Common myeloid progenitor, CD34-positive (primary cell): ENCODE measurements at regions of chr14 and their contacts with region 1.

Region 1: GRCh38 chr14:91138511-91139359 is 24.9 kb downstream of the DGLUCY start:
- DNase-seq: peak; percentile 74 to 86 (median 81)
- H3K4me3 ChIP-seq: no peak overlapping the region
- H3K27ac ChIP-seq: no peak overlapping the region
- H3K4me1 ChIP-seq: peaks cover 6 to 27% (median 21%) of the 10 kb centered on the region in 4 experiments
- H3K27me3 ChIP-seq: no peaks in the 10 kb centered on the region

Region 2: DNA sequence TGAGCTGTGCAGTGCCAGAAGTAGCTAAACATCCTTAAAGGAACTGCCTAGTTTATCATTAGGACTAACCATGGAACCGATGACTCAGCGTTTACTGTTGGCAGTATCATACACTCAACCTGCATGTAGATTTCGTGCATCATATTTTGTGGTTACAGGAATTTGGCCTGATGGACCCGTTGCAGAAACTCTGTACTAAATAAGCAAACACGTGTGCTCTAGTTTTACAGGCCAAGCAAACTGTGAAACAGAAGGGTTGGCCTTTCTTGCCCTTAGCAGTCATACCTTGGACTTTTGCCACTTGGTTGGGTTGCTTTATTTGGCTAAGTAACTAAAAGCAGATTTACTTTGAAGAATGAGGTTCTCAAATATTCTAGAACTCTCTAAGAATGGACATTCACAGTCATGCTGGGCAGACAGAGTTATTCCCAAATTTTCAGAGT is 10.8 kb after region 1 on chr14:
- CTCF ChIA-PET with region 1: interaction called, 15 read pairs
- POLR2A ChIA-PET with region 1: no interaction called
- DNase-seq: peak; percentile 72 to 90 (median 88)
- H3K4me3 ChIP-seq: no peak overlapping the region
- H3K27ac ChIP-seq: no peak overlapping the region
- H3K4me1 ChIP-seq: peaks cover under 1 to 24% (median 18%) of the 10 kb centered on the region in 4 experiments
- H3K27me3 ChIP-seq: no peaks in the 10 kb centered on the region

Region 3: DNA sequence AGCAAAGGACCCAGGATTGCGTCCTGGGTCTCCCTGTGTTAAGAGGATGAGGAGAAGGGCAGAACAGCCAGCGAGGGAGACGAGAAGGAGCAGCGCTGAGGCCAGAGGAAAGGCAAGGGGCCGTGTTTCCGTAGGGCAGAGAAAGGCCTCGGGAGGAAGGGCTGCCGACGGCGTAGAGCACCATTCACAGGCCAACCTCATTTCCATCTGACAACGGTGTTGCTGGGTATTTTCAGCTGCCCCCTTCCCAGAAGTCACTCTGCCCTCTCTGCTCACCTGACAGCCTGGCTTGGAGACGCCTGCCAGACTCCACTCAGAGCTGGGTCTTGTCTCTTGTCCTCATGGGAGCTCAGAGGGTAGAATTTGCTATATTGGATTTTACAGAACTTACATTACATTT is 54.3 kb after region 1 on chr14:
- CTCF ChIA-PET with region 1: no interaction called
- POLR2A ChIA-PET with region 1: no interaction called
- DNase-seq: no peak
- H3K4me3 ChIP-seq: no peak overlapping the region
- H3K27ac ChIP-seq: no peak overlapping the region
- H3K4me1 ChIP-seq: peaks cover 0 to 4% (median 0%) of the 10 kb centered on the region in 4 experiments
- H3K27me3 ChIP-seq: no peaks in the 10 kb centered on the region